A673 (cell line): ENCODE measurements at regions of chr2 and their contacts with region 1.

Region 1: DNA sequence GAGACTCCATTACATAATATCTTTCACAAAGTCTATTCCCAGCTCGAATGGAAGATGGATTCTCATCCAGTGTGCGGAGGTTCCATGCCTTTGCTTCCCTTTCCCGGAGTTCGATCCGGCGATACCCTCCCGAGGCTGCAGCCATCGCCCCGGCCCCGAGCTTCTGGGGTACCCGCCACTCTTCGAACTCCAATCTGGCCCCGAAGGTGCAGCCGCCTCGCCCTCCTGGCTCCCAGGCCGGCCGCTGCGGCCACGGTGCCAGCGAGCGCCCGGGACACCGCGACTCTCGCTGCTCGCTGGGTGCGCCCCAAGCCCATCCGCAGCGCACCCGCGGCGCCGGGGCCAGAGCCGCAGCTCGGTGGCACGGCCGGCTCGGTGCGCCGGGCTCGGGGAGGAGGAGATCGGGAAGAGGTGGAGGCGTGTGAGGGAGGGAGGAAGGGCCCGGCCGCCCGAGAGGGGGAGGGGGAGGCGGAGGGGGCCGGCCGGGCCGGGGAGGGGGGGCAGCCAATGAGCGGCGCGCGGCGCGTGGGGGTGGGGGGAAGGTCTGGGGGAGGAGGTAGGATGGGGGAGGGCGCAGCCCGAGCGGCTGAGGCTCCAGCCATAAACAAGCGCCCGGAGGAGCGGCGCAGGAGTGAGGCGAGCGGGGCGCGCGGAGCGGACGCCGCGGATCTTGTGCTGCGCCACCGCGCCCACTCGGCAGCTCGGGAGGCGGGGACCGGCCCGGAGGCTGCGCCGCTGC is at the start of gene CRIM1:
- DNase-seq: peak; percentile 91
- H3K4me3 ChIP-seq: peak within 1 kb of the TSS; percentile 83
- H3K27ac ChIP-seq: peak within 1 kb of the TSS; percentile 66
- H3K4me1 ChIP-seq: peaks cover 29% of the 10 kb centered on the region
- H3K27me3 ChIP-seq: no peaks in the 10 kb centered on the region
- CTCF ChIP-seq: no peak
- total RNA-seq, gene CRIM1: 35.3 and 46.5 TPM in 2 replicates

Region 2: DNA sequence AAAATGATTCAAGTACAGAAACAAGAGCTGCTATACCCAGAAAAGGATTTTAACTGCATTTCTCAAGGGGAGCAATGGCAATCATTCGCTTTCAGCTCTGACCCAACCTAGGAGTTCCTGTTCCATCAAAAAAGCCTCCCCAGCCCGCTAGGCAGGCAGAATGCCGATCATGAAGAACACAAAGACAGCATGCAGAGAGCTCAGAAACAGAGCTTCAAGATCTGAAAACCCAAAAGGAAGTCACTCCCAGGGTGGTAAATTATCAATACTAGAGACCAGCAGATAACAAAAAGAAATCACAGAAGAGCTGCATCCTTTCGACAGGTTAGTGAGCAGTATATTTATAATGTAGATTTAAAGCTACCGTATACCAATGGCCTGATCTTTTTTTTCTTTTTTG is 84.6 kb before region 1 on chr2:
- CTCF ChIA-PET with region 1: no interaction called
- POLR2A ChIA-PET with region 1: interaction called, 15 read pairs
- intact Hi-C with region 1: no loop called
- DNase-seq: peak; percentile 84
- H3K4me3 ChIP-seq: no peak overlapping the region
- H3K27ac ChIP-seq: no peak overlapping the region
- H3K4me1 ChIP-seq: peaks cover 13% of the 10 kb centered on the region
- H3K27me3 ChIP-seq: no peaks in the 10 kb centered on the region
- CTCF ChIP-seq: no peak

Region 3: DNA sequence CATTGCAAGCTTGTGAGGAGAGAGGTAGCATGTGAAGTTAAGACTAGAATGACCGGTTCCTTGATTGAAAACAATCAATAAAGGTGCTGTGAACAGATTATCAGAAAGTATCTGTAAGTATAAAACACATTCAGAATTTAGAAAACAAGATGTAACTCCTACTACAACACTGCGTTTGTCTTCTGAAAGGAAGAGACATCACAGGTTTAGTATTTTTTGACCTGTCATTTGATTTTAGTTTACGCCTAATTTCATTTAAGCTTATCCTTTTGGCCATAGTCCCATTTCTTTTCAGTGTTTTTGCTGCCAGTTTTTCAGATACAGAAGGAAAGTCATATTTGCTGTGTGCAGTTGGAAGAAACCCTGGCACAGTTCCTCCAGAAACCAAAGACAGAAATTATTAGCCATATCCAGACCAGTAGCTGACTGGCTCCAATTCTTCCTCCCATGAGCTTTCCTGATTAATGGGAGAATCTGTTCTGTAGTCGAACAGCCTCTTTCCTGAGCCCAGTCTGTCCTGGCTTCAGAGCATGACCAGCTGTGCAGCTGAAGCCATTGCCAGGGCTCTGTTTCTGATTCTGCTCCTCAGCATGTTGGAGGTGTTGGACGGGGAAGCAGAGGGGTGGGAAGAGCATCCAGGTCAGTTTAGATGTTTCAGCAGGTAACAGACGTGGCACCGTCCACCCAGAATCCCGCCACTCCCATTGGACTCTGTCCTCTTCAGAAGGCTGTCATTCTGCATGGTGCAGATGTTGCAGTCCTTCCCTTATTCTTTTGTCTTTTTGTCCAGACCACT is 61.2 kb after region 1 on chr2:
- CTCF ChIA-PET with region 1: no interaction called
- POLR2A ChIA-PET with region 1: interaction called, 4 read pairs
- intact Hi-C with region 1: loop called (anchors 5 kb)
- DNase-seq: no peak
- H3K4me3 ChIP-seq: no peak overlapping the region
- H3K27ac ChIP-seq: no peak overlapping the region
- H3K4me1 ChIP-seq: peaks cover 19% of the 10 kb centered on the region
- H3K27me3 ChIP-seq: no peaks in the 10 kb centered on the region
- CTCF ChIP-seq: no peak

Region 4: GRCh38 chr2:36461039-36461681 is 105.8 kb after region 1 on chr2:
- CTCF ChIA-PET with region 1: interaction called, 8 read pairs
- POLR2A ChIA-PET with region 1: no interaction called
- intact Hi-C with region 1: loop called (anchors 2 kb)
- DNase-seq: peak; percentile 90
- H3K4me3 ChIP-seq: no peak overlapping the region
- H3K27ac ChIP-seq: peak overlapping the region; percentile 79
- H3K4me1 ChIP-seq: peaks cover 69% of the 10 kb centered on the region
- H3K27me3 ChIP-seq: no peaks in the 10 kb centered on the region
- CTCF ChIP-seq: no peak

Region 5: DNA sequence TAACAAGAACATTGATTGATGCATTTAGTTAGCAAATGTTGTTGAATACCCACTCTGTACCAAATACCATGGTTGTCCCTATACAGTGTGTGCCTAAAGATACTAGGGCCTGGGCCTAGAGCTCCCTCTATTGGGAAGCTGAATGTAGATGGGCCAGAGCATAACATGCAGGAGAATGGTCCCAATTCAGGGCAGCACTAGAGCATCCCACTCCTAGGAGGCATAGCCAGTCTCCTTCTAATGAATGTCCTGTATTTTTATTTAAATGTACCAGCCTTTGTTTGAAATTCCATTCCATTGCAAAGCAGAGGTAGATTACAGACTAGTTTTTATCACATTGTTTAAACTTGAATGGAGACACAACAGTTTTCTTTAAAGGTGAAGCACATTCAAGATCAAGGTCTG is 152.1 kb after region 1 on chr2:
- CTCF ChIA-PET with region 1: interaction called, 5 read pairs
- POLR2A ChIA-PET with region 1: no interaction called
- intact Hi-C with region 1: loop called (anchors 1 kb)
- DNase-seq: peak; percentile 84
- H3K4me3 ChIP-seq: no peak overlapping the region
- H3K27ac ChIP-seq: no peak overlapping the region
- H3K4me1 ChIP-seq: no peaks in the 10 kb centered on the region
- H3K27me3 ChIP-seq: no peaks in the 10 kb centered on the region
- CTCF ChIP-seq: peak; percentile 91

Region 6: GRCh38 chr2:36663851-36664695 is 308.8 kb after region 1 on chr2:
- CTCF ChIA-PET with region 1: interaction called, 8 read pairs
- POLR2A ChIA-PET with region 1: no interaction called
- intact Hi-C with region 1: loop called (anchors 2 kb)
- DNase-seq: peak; percentile 88
- H3K4me3 ChIP-seq: no peak overlapping the region
- H3K27ac ChIP-seq: no peak overlapping the region
- H3K4me1 ChIP-seq: no peaks in the 10 kb centered on the region
- H3K27me3 ChIP-seq: no peaks in the 10 kb centered on the region
- CTCF ChIP-seq: peak; percentile 87

Region 7: GRCh38 chr2:36785179-36785795 is 430.0 kb after region 1 on chr2:
- CTCF ChIA-PET with region 1: no interaction called
- POLR2A ChIA-PET with region 1: no interaction called
- intact Hi-C with region 1: loop called (anchors 5 kb)
- DNase-seq: peak; percentile 72
- H3K4me3 ChIP-seq: no peak overlapping the region
- H3K27ac ChIP-seq: no peak overlapping the region
- H3K4me1 ChIP-seq: peaks cover 8% of the 10 kb centered on the region
- H3K27me3 ChIP-seq: no peaks in the 10 kb centered on the region
- CTCF ChIP-seq: peak; percentile 94

Region 8: GRCh38 chr2:36902385-36903120 is 547.2 kb after region 1 on chr2:
- CTCF ChIA-PET with region 1: no interaction called
- POLR2A ChIA-PET with region 1: no interaction called
- intact Hi-C with region 1: no loop called
- DNase-seq: no peak
- H3K4me3 ChIP-seq: no peak overlapping the region
- H3K27ac ChIP-seq: no peak overlapping the region
- H3K4me1 ChIP-seq: no peaks in the 10 kb centered on the region
- H3K27me3 ChIP-seq: no peaks in the 10 kb centered on the region
- CTCF ChIP-seq: no peak